ENCODE measurements at regions of chr20 and their contacts with region 1.

Region 1: GRCh38 chr20:20568604-20569205 is 143.7 kb downstream of the RALGAPA2 start:
- DNase-seq: peak; percentile 25
- ATAC-seq: no peak
- H3K4me3 ChIP-seq: no peak overlapping the region
- H3K27ac ChIP-seq: no peak overlapping the region
- H3K4me1 ChIP-seq: no peaks in the 10 kb centered on the region
- H3K27me3 ChIP-seq: no peaks in the 10 kb centered on the region
- CTCF ChIP-seq: peak; percentile 79; the same call in 1 of the 2 replicates

Region 2: GRCh38 chr20:19376451-19377229 is 1192.1 kb before region 1 on chr20:
- CTCF ChIA-PET with region 1: no interaction called
- POLR2A ChIA-PET with region 1: no interaction called
- in situ Hi-C with region 1: no loop called
- intact Hi-C with region 1: no loop called
- DNase-seq: no peak
- ATAC-seq: no peak
- H3K4me3 ChIP-seq: no peak overlapping the region
- H3K27ac ChIP-seq: no peak overlapping the region
- H3K4me1 ChIP-seq: no peaks in the 10 kb centered on the region
- H3K27me3 ChIP-seq: 0 out of 2 replicates have a peak, but pooled peaks cover 2% of the 10 kb centered on the region
- CTCF ChIP-seq: no peak

Region 3: DNA sequence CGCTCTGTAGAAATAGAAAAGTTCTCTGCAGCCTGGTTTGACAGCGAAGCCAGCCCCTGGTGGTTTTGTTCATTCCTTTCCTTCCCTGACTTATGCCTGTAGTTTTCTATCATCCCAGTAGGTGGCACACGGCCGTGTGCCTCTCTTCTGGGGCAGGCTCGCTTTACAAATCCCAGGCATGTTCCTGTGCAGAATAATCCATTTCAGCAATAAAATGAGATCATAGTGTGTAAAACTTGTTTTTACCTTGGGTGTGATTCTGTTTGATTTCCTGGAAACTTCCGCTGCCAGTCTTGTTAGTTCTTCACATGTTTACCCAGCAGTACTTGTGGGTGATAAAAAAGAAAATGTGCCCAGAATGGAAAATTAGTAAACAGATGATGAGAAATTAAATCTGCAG is 208.2 kb before region 1 on chr20:
- CTCF ChIA-PET with region 1: no interaction called
- POLR2A ChIA-PET with region 1: no interaction called
- in situ Hi-C with region 1: no loop called
- intact Hi-C with region 1: loop called (anchors 2 kb)
- DNase-seq: peak; percentile 39
- ATAC-seq: peak; percentile 91
- H3K4me3 ChIP-seq: no peak overlapping the region
- H3K27ac ChIP-seq: no peak overlapping the region
- H3K4me1 ChIP-seq: no peaks in the 10 kb centered on the region
- H3K27me3 ChIP-seq: peaks cover 32% of the 10 kb centered on the region
- CTCF ChIP-seq: peak; percentile 92

Region 4: DNA sequence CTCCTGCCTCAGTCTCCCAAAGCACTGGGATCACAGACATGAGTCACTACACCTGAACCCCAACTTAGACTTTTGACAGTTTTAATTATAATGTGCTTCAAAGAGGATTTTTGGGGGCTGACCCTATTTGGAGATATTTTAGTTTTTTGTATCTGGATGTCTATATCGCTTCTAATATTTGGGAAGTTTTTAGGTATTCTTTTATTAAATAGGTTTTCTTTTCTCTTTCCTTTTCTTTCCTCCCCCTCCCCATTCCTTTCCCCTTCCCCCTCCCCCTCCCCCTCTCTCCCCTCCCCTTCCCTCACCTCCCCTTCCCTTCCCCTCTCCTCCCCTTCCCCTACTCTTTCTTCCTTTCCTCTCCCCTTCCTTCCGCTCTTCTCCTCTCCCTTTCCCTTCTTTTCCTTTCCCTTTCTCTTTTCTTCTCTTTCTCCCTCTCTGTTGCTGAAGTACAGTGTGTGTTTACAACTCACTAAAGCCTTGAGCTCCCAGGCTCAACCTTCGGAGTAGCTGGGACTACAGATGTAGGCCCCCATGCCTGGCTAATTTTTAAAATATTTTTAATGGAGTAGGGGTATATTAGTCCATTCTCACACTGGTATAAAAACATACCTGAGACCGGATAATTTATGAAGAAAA is 853.0 kb after region 1 on chr20:
- CTCF ChIA-PET with region 1: no interaction called
- POLR2A ChIA-PET with region 1: no interaction called
- in situ Hi-C with region 1: no loop called
- intact Hi-C with region 1: no loop called
- DNase-seq: no peak
- ATAC-seq: no peak
- H3K4me3 ChIP-seq: no peak overlapping the region
- H3K27ac ChIP-seq: no peak overlapping the region
- H3K4me1 ChIP-seq: no peaks in the 10 kb centered on the region
- H3K27me3 ChIP-seq: no peaks in the 10 kb centered on the region
- CTCF ChIP-seq: no peak

Measured in Panc1 (cell line).